ENCODE measurements at regions of chr12 and their contacts with region 1.

Region 1: DNA sequence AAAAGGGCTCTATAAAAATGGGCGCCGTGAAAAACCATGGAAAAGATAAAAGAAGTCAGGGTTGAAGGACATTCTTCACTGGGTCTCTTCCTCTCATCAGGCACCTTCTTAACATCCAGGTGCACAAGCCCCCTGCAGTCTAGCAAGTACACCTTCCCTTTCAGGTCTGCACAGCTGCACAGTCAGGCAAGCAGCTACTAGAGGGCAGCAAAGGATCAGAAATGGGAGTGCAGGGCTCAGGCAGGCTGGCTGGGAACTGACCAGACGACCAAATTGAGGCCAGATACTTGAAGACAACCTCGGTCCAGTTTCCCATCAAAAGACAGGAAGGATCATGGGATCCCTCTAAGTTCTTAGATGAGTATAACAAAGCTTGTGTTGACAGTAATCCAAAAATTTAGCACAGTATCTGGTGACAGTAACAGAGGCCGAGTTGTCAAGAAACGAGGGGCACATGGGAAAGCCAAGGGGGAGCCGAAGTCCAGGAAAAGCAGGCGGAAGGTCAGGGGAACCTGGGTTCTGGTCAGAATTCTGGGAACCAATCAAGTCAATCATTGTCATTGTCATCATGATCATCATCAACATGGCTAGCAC is 10.1 kb upstream of the GRIP1 start:
- DNase-seq: peak; percentile 65
- ATAC-seq: peak; percentile 100
- H3K4me3 ChIP-seq: no peak overlapping the region
- H3K27ac ChIP-seq: no peak overlapping the region
- H3K4me1 ChIP-seq: no peaks in the 10 kb centered on the region
- H3K27me3 ChIP-seq: peaks cover 0 to 4% of the 10 kb centered on the region in 2 experiments; a peak in 2 of 5 replicates
- CTCF ChIP-seq: peak; percentile 88
- EP300 ChIP-seq: no peak
- POLR2A ChIP-seq: no peak
- RAD21 ChIP-seq: peak; percentile 65

Region 2: GRCh38 chr12:66624806-66625205 is 64.1 kb before region 1 on chr12:
- CTCF ChIA-PET with region 1: no interaction called
- POLR2A ChIA-PET with region 1: no interaction called
- in situ Hi-C with region 1: no loop called
- intact Hi-C with region 1: no loop called
- DNase-seq: no peak
- ATAC-seq: no peak
- H3K4me3 ChIP-seq: no peak overlapping the region
- H3K27ac ChIP-seq: no peak overlapping the region
- H3K4me1 ChIP-seq: peaks cover 13% of the 10 kb centered on the region
- H3K27me3 ChIP-seq: peaks cover 0 to 3% of the 10 kb centered on the region in 2 experiments; a peak in 1 of 5 replicates
- CTCF ChIP-seq: no peak
- EP300 ChIP-seq: no peak
- POLR2A ChIP-seq: no peak
- RAD21 ChIP-seq: no peak

Region 3: GRCh38 chr12:66763467-66763866 is 74.5 kb after region 1 on chr12:
- CTCF ChIA-PET with region 1: no interaction called
- POLR2A ChIA-PET with region 1: no interaction called
- in situ Hi-C with region 1: no loop called
- intact Hi-C with region 1: no loop called
- DNase-seq: no peak
- ATAC-seq: no peak
- H3K4me3 ChIP-seq: no peak overlapping the region
- H3K27ac ChIP-seq: no peak overlapping the region
- H3K4me1 ChIP-seq: no peaks in the 10 kb centered on the region
- H3K27me3 ChIP-seq: no peaks in the 10 kb centered on the region
- CTCF ChIP-seq: no peak
- EP300 ChIP-seq: no peak
- POLR2A ChIP-seq: no peak
- RAD21 ChIP-seq: no peak

Region 4: DNA sequence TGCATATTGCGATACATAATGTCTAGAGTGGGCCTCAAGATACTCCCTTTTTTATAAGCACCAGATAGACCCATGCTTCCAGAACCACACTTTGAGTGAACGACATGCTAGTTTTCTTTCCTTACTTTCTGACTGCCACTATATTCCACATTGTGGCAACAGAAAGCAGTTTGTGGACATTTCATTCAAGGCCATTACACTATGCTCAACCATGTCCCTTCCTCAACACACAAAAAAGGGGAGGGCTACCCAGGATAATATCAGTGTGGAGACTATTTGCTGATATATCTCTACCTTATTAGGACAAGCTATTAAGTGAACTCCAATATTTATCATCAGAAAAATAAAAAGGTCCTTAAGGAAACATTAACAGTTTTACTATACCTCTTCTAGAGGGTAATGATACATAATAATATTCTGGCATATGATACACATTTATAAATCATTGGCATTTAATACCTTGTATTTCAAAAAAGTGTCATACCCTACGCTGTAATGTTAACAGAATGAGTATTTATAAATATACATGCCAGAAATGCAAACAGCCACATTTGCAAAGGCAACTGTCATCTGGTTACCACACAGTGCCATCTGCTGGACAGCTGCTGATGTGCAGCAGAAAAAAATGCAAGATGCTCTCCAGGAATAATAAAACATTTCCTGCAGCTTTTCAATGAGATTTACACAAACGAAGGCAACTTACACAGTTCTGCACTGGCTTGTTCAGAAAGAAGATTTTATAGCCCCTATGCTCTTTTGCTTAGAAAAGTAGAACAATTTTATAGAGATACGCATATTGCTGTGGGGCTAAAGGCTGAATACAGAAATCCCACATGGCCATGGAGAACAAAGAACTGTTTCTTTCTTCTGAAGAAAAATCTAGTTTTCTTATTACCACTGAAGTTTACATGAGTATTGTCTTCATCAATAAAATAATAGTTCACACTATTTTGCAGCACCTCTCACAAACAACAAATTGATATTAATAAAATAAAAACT is 172.1 kb after region 1 on chr12:
- CTCF ChIA-PET with region 1: interaction called, 14 read pairs
- POLR2A ChIA-PET with region 1: no interaction called
- in situ Hi-C with region 1: loop called (anchors 5 kb)
- intact Hi-C with region 1: loop called (anchors 1 kb)
- DNase-seq: peak; percentile 31
- ATAC-seq: 0 out of 3 replicates have a peak, but pooled peaks have one; percentile 26
- H3K4me3 ChIP-seq: no peak overlapping the region
- H3K27ac ChIP-seq: no peak overlapping the region
- H3K4me1 ChIP-seq: no peaks in the 10 kb centered on the region
- H3K27me3 ChIP-seq: no peaks in the 10 kb centered on the region
- CTCF ChIP-seq: peak; percentile 77
- EP300 ChIP-seq: no peak
- POLR2A ChIP-seq: no peak
- RAD21 ChIP-seq: no peak